Endothelial cell of umbilical vein (primary cell): ENCODE measurements at regions of chrX and their contacts with region 1.

Region 1: DNA sequence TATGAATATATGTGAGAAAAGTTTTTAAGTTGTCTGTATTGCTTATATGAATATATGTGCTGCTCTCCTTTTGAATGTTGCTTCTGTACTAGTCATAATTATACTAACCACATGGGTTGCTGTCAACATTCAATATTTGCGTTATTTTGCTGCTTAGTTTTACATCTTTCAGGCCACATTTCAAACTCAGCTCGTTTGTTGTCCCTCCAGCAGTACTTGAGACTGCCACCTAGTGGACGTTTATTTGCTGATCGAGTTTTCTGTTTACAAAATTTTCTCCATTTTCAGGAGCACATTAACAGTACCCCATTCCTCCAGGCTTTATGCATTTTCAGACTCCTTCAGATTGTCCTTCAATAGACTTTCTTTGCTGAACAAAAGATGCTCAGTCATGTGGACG is 75.8 kb downstream of the NUDT11 start:
- DNase-seq: peak; percentile 13
- H3K4me3 ChIP-seq: no peak overlapping the region
- H3K27ac ChIP-seq: no peak overlapping the region
- H3K4me1 ChIP-seq: no peaks in the 10 kb centered on the region
- H3K27me3 ChIP-seq: no peaks in the 10 kb centered on the region
- CTCF ChIP-seq: peak; percentile 25 to 51
- POLR2A ChIP-seq: no peak

Region 2: DNA sequence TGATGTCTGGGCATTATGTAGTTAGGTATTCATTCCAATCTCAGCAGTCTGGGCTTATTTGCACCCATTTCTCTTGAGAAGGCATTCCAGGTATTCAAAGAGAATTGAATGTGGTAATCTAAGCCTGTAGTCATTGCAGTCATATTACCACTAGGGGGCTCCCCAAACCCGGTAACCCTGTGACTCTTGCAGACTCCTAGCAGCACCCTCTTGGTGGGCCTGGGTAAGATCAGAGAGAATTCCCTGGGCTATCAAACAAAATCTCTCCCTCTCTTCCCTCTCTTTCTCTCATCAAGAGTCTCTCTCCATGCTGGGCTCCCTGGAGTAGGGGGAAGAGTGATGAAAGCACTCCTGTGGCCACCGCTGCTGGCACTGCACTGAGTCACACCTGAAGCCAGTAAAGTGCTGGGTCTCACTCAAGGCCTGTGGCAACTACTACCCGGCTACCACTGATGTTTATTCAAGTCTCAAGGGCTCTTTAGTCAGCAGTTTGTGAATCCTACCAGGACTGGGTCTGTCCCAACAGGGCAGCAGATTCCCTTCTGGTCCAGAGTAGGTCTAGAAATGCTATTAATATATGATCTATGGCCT is 275.7 kb before region 1 on chrX:
- CTCF ChIA-PET with region 1: interaction called, 5 read pairs
- POLR2A ChIA-PET with region 1: no interaction called
- dilution Hi-C with region 1: no loop called
- intact Hi-C with region 1: loop called (anchors 2 kb)
- DNase-seq: peak; percentile 13
- H3K4me3 ChIP-seq: no peak overlapping the region
- H3K27ac ChIP-seq: no peak overlapping the region
- H3K4me1 ChIP-seq: no peaks in the 10 kb centered on the region
- H3K27me3 ChIP-seq: no peaks in the 10 kb centered on the region
- CTCF ChIP-seq: peak; percentile 36 to 54
- POLR2A ChIP-seq: no peak

Region 3: DNA sequence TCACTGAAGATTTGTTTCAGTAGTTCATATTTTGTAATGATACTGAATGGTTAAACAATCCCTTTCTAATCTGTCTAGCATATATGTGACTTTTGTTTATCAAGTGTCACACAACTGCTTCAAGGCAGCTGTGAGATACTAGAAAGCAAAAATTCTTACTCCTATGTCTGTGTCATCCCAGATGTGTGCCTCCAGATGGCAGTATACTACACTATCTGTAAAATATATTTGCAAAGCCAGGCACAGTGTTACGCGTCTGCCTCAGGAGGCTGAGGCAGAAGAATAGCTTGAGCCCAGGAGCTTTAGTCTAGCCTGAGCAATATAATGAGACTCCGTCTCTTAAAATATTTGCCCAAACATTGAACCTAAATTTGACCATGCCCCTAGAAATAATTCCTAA is 84.0 kb before region 1 on chrX:
- CTCF ChIA-PET with region 1: interaction called, 36 read pairs
- POLR2A ChIA-PET with region 1: no interaction called
- dilution Hi-C with region 1: no loop called
- intact Hi-C with region 1: loop called (anchors 1 kb)
- DNase-seq: peak; percentile 18
- H3K4me3 ChIP-seq: no peak overlapping the region
- H3K27ac ChIP-seq: no peak overlapping the region
- H3K4me1 ChIP-seq: no peaks in the 10 kb centered on the region
- H3K27me3 ChIP-seq: peaks cover 2 to 4% of the 10 kb centered on the region in 2 experiments
- CTCF ChIP-seq: peak; percentile 10 to 30
- POLR2A ChIP-seq: no peak

Region 4: GRCh38 chrX:51406688-51407461 is 13.7 kb before region 1 on chrX:
- CTCF ChIA-PET with region 1: interaction called, 12 read pairs
- POLR2A ChIA-PET with region 1: no interaction called
- dilution Hi-C with region 1: no loop called
- intact Hi-C with region 1: no loop called
- DNase-seq: no peak
- H3K4me3 ChIP-seq: no peak overlapping the region
- H3K27ac ChIP-seq: no peak overlapping the region
- H3K4me1 ChIP-seq: no peaks in the 10 kb centered on the region
- H3K27me3 ChIP-seq: no peaks in the 10 kb centered on the region
- CTCF ChIP-seq: no peak
- POLR2A ChIP-seq: no peak